Naive thymus-derived CD4-positive, alpha-beta T cell (primary cell): ENCODE measurements at regions of chr5 and their contacts with region 1.

Region 1: DNA sequence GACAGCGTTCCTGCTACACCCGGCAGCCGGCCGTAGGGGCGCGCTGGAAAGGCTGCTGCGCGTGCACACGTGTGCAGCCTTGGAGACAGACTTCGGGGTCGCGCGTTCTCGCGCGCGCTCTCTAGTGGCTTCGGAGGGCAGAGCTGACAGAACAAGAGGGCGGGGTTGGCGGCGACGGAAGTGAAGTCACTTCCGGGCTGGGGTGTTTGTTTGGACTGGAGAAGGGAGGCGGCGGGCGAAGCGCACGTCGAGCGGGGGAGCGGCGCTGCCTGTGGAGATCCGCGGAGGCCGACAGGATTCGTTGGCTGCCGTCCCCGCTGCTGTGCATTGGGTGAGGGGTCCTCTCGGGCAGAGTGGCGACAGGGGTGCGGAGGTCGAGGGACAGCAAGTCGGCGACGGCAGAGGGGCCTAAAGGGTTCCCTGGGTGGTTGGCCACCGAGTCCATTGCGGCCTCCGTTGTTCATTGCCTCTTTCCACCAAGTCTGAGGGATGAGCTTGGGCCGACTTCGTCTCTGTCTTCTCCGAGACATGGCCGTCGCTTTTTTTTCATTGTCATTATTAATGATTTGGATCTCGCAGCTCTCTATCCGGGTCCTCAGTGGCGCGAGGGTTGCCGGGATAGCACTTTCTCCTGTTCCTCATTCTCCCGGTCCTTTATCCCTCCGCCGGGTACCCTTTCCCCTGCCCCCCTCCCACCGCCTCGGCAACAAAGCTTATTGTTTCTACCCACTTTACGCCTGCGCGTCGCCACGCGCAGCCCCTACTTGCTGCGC is at the start of gene PAIP2:
- DNase-seq: peak; percentile 94 to 98 (median 97)
- ATAC-seq: peak; percentile 95
- H3K4me3 ChIP-seq: peak within 1 kb of the TSS; percentile 96
- H3K4me3 Mint-ChIP-seq: peak within 1 kb of the TSS; percentile 95 to 100 (median 98)
- H3K27ac ChIP-seq: peak within 1 kb of the TSS; percentile 98
- H3K27ac Mint-ChIP-seq: peak within 1 kb of the TSS; percentile 96 to 100 (median 99)
- H3K4me1 ChIP-seq: peaks cover 28 to 30% of the 10 kb centered on the region in 2 donors
- H3K4me1 Mint-ChIP-seq: peaks cover 34 to 65% (median 55%) of the 10 kb centered on the region in 7 donors
- H3K27me3 ChIP-seq: no peaks in the 10 kb centered on the region
- H3K27me3 Mint-ChIP-seq: peaks cover 0 to 5% (median 0%) of the 10 kb centered on the region in 5 donors
- total RNA-seq, gene PAIP2: 88.8 to 121 (median 106) TPM

Region 2: GRCh38 chr5:138331449-138332368 is 1010.1 kb before region 1 on chr5 and contains the start of gene CDC25C:
- CTCF ChIA-PET with region 1: no interaction called
- POLR2A ChIA-PET with region 1: no interaction called
- intact Hi-C with region 1: loop called in 1 of 2 experiments (anchors 10 kb)
- DNase-seq: peak; percentile 87 to 98 (median 96)
- ATAC-seq: peak; percentile 100
- H3K4me3 ChIP-seq: peak within 1 kb of the TSS; percentile 85
- H3K4me3 Mint-ChIP-seq: peak within 1 kb of the TSS; percentile 83 to 95 (median 86)
- H3K27ac ChIP-seq: peak within 1 kb of the TSS; percentile 49
- H3K27ac Mint-ChIP-seq: peak within 1 kb of the TSS; percentile 48 to 92 (median 68)
- H3K4me1 ChIP-seq: peaks cover 1 to 7% of the 10 kb centered on the region in 2 donors
- H3K4me1 Mint-ChIP-seq: peaks cover 7 to 35% (median 14%) of the 10 kb centered on the region in 7 donors
- H3K27me3 ChIP-seq: no peaks in the 10 kb centered on the region
- H3K27me3 Mint-ChIP-seq: no peaks in the 10 kb centered on the region
- total RNA-seq, gene CDC25C: 9.8 TPM in 1 of 5 experiments, not detected in the others

Region 3: GRCh38 chr5:139197710-139198669 is 143.8 kb before region 1 on chr5 and contains the start of gene SIL1:
- CTCF ChIA-PET with region 1: no interaction called
- POLR2A ChIA-PET with region 1: interaction called, 3 read pairs
- intact Hi-C with region 1: loop called (anchors 1 kb)
- DNase-seq: peak; percentile 88 to 94 (median 91)
- ATAC-seq: peak; percentile 99
- H3K4me3 ChIP-seq: peak within 1 kb of the TSS; percentile 97
- H3K4me3 Mint-ChIP-seq: peak within 1 kb of the TSS; percentile 83 to 96 (median 90)
- H3K27ac ChIP-seq: peak within 1 kb of the TSS; percentile 89
- H3K27ac Mint-ChIP-seq: peak within 1 kb of the TSS; percentile 86 to 96 (median 91)
- H3K4me1 ChIP-seq: peaks cover 8% of the 10 kb centered on the region in 2 donors
- H3K4me1 Mint-ChIP-seq: peaks cover 17 to 38% (median 26%) of the 10 kb centered on the region in 7 donors
- H3K27me3 ChIP-seq: no peaks in the 10 kb centered on the region
- H3K27me3 Mint-ChIP-seq: no peaks in the 10 kb centered on the region
- total RNA-seq, gene SIL1: 11.9 to 27.1 (median 22.8) TPM

Region 4: GRCh38 chr5:139287890-139288635 is 53.8 kb before region 1 on chr5:
- CTCF ChIA-PET with region 1: interaction called, 4 read pairs
- POLR2A ChIA-PET with region 1: interaction called, 61 read pairs
- intact Hi-C with region 1: loop called (anchors 1 kb)
- DNase-seq: peak in 4 of 9 donors; percentile 21 to 38 (median 34)
- ATAC-seq: peak; percentile 57
- H3K4me3 ChIP-seq: no peak overlapping the region
- H3K4me3 Mint-ChIP-seq: no peak overlapping the region
- H3K27ac ChIP-seq: no peak overlapping the region
- H3K27ac Mint-ChIP-seq: peak overlapping the region in 2 of 9 donors; percentile 0 to 7
- H3K4me1 ChIP-seq: peaks cover 0 to 3% of the 10 kb centered on the region in 2 donors
- H3K4me1 Mint-ChIP-seq: peaks cover 0 to 20% (median 5%) of the 10 kb centered on the region in 7 donors
- H3K27me3 ChIP-seq: no peaks in the 10 kb centered on the region
- H3K27me3 Mint-ChIP-seq: no peaks in the 10 kb centered on the region

Region 5: DNA sequence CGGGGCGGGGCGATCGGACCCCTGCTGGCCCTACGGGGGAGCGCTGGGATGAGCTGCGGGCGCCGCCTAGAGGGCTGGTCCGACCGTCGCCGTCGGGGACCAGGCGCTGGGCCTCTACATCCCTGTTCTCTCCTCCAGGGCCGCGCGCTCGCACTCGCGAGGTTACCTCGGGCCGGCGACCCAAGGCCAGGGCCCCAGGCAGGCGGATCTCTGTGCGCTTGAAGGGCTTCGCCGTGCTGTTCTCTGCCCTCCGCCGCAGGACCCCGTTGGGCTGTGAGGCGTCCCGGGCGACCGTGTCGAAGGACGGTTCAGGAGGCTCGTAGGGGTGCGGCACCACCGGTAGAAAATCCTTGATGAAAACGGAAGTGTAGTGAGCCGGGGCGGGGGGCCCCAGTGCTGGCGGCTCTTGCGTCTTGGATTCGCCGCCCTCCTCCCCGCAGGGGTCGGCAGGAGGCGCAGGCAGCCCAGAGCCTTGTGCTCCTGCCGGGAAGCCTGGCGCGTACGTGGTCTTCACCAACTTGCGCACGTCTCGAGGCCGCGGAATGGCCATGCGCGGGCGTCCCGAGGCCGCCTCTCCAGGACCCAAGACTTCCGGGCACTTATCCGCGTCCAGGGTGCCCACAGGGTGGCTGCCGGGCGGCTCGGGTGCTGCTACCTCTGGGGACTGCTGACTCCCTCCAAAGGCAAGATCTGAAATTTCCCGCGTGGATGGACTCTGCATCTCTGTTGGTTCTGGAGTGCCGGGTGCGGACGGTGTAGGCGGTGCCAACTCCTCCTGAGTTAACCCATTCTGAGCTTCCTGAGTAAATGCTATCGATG is 51.1 kb after region 1 on chr5:
- CTCF ChIA-PET with region 1: interaction called, 3 read pairs
- POLR2A ChIA-PET with region 1: interaction called, 3 read pairs
- intact Hi-C with region 1: loop called (anchors 1 kb)
- DNase-seq: peak; percentile 39 to 87 (median 60)
- ATAC-seq: peak; percentile 82
- H3K4me3 ChIP-seq: peak overlapping the region; percentile 76
- H3K4me3 Mint-ChIP-seq: peak overlapping the region; percentile 87 to 97 (median 90)
- H3K27ac ChIP-seq: peak overlapping the region; percentile 17
- H3K27ac Mint-ChIP-seq: peak overlapping the region in 6 of 9 donors; percentile 7 to 97 (median 59)
- H3K4me1 ChIP-seq: peaks cover 5 to 34% of the 10 kb centered on the region in 2 donors
- H3K4me1 Mint-ChIP-seq: peaks cover 12 to 61% (median 23%) of the 10 kb centered on the region in 7 donors
- H3K27me3 ChIP-seq: no peaks in the 10 kb centered on the region
- H3K27me3 Mint-ChIP-seq: no peaks in the 10 kb centered on the region

Region 6: GRCh38 chr5:139844472-139845145 is 502.8 kb after region 1 on chr5:
- CTCF ChIA-PET with region 1: no interaction called
- POLR2A ChIA-PET with region 1: no interaction called
- intact Hi-C with region 1: loop called in 1 of 2 experiments (anchors 1 kb)
- DNase-seq: peak; percentile 26 to 62 (median 57)
- ATAC-seq: peak; percentile 28
- H3K4me3 ChIP-seq: no peak overlapping the region
- H3K4me3 Mint-ChIP-seq: peak overlapping the region in 2 of 10 donors; percentile 21 to 49
- H3K27ac ChIP-seq: no peak overlapping the region
- H3K27ac Mint-ChIP-seq: no peak overlapping the region
- H3K4me1 ChIP-seq: peaks cover 0 to 5% of the 10 kb centered on the region in 2 donors
- H3K4me1 Mint-ChIP-seq: peaks cover 7 to 17% (median 12%) of the 10 kb centered on the region in 7 donors
- H3K27me3 ChIP-seq: no peaks in the 10 kb centered on the region
- H3K27me3 Mint-ChIP-seq: peaks cover 13 to 59% (median 16%) of the 10 kb centered on the region in 5 donors